ENCODE measurements at regions of chr5 and their contacts with region 1.

Region 1: GRCh38 chr5:176415952-176416924 is at the start of gene CLTB:
- DNase-seq: peak; percentile 95
- ATAC-seq: peak; percentile 97
- H3K4me3 ChIP-seq: peak within 1 kb of the TSS; percentile 51 to 86 (median 70)
- H3K4me3 Mint-ChIP-seq: peak within 1 kb of the TSS; percentile 83
- H3K27ac ChIP-seq: peak within 1 kb of the TSS in 1 of 2 donors; percentile 58
- H3K27ac Mint-ChIP-seq: peak within 1 kb of the TSS; percentile 77
- H3K4me1 ChIP-seq: peaks cover 14 to 19% of the 10 kb centered on the region in 2 donors
- H3K4me1 Mint-ChIP-seq: peaks cover 21% of the 10 kb centered on the region
- H3K27me3 ChIP-seq: no peaks in the 10 kb centered on the region
- H3K27me3 Mint-ChIP-seq: peaks cover 2% of the 10 kb centered on the region
- CTCF ChIP-seq: peak; percentile 74
- total RNA-seq, gene CLTB: 29.6 and 29.9 TPM in 2 replicates

Region 2: GRCh38 chr5:176361437-176362232 is 54.6 kb before region 1 on chr5 and contains the start of gene KIAA1191:
- CTCF ChIA-PET with region 1: interaction called, 15 read pairs
- POLR2A ChIA-PET with region 1: no interaction called
- intact Hi-C with region 1: loop called (anchors 5 kb)
- DNase-seq: peak; percentile 96
- ATAC-seq: peak; percentile 87
- H3K4me3 ChIP-seq: peak within 1 kb of the TSS; percentile 47 to 94 (median 82)
- H3K4me3 Mint-ChIP-seq: peak within 1 kb of the TSS; percentile 98
- H3K27ac ChIP-seq: peak within 1 kb of the TSS; percentile 77 to 92
- H3K27ac Mint-ChIP-seq: peak within 1 kb of the TSS; percentile 98
- H3K4me1 ChIP-seq: peaks cover 21 to 36% of the 10 kb centered on the region in 2 donors
- H3K4me1 Mint-ChIP-seq: peaks cover 42% of the 10 kb centered on the region
- H3K27me3 ChIP-seq: no peaks in the 10 kb centered on the region
- H3K27me3 Mint-ChIP-seq: no peaks in the 10 kb centered on the region
- CTCF ChIP-seq: peak; percentile 31
- total RNA-seq, gene KIAA1191: 82.9 and 88.1 TPM in 2 replicates

Region 3: DNA sequence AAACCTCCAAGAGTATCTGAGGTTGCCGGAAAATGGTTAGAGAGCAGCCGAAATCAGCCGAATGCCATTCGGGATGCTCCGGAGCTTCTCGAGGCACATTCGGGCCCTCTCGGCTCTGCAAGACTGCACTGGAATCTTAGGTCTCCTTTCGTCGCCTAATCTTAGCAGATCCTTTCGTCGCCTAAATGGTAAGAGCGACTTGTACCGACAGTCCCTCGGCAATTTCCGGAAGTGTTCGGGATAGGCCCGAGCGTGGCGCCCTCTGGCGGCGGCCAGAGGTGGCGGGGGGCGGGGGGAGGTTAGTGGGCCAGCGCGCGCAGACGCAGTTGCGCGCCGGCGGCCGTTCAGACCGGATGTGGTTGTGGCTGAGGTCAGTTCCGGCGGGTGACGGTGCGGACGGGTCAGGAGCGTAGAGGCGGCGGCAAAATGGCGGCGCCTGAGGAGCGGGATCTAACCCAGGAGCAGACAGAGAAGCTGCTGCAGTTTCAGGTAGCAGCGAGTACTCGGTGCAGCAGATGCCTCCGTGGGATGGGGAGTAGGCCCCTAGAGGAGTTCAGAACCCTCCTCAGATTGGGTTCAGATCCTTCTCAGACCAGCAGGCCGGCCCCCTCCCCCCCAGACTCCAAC is 31.9 kb after region 1 on chr5 and contains the start of gene FAF2:
- CTCF ChIA-PET with region 1: interaction called, 29 read pairs
- POLR2A ChIA-PET with region 1: interaction called, 6 read pairs
- intact Hi-C with region 1: loop called (anchors 1 kb)
- DNase-seq: peak; percentile 99
- ATAC-seq: peak; percentile 91
- H3K4me3 ChIP-seq: peak within 1 kb of the TSS; percentile 77 to 99 (median 99)
- H3K4me3 Mint-ChIP-seq: peak within 1 kb of the TSS; percentile 98
- H3K27ac ChIP-seq: peak within 1 kb of the TSS; percentile 81 to 93
- H3K27ac Mint-ChIP-seq: peak within 1 kb of the TSS; percentile 99
- H3K4me1 ChIP-seq: peaks cover 16 to 20% of the 10 kb centered on the region in 2 donors
- H3K4me1 Mint-ChIP-seq: peaks cover 32% of the 10 kb centered on the region
- H3K27me3 ChIP-seq: no peaks in the 10 kb centered on the region
- H3K27me3 Mint-ChIP-seq: no peaks in the 10 kb centered on the region
- CTCF ChIP-seq: peak; percentile 92
- total RNA-seq, gene FAF2: 35.1 and 41.3 TPM in 2 replicates

Region 4: GRCh38 chr5:176543428-176544173 is 127.4 kb after region 1 on chr5:
- CTCF ChIA-PET with region 1: interaction called, 33 read pairs
- POLR2A ChIA-PET with region 1: interaction called, 3 read pairs
- intact Hi-C with region 1: loop called (anchors 2 kb)
- DNase-seq: peak; percentile 88
- ATAC-seq: peak; percentile 76
- H3K4me3 ChIP-seq: peak overlapping the region; percentile 64 to 79 (median 73)
- H3K4me3 Mint-ChIP-seq: peak overlapping the region; percentile 96
- H3K27ac ChIP-seq: peak overlapping the region; percentile 82 to 88
- H3K27ac Mint-ChIP-seq: peak overlapping the region; percentile 98
- H3K4me1 ChIP-seq: peaks cover 30 to 36% of the 10 kb centered on the region in 2 donors
- H3K4me1 Mint-ChIP-seq: peaks cover 47% of the 10 kb centered on the region
- H3K27me3 ChIP-seq: no peaks in the 10 kb centered on the region
- H3K27me3 Mint-ChIP-seq: no peaks in the 10 kb centered on the region
- CTCF ChIP-seq: no peak

Region 5: GRCh38 chr5:176596689-176597416 is 180.6 kb after region 1 on chr5:
- CTCF ChIA-PET with region 1: interaction called, 4 read pairs
- POLR2A ChIA-PET with region 1: no interaction called
- intact Hi-C with region 1: loop called (anchors 1 kb)
- DNase-seq: peak; percentile 77
- ATAC-seq: peak; percentile 85
- H3K4me3 ChIP-seq: peak overlapping the region in 3 of 5 experiments; percentile 20 to 42 (median 39)
- H3K4me3 Mint-ChIP-seq: peak overlapping the region; percentile 75
- H3K27ac ChIP-seq: no peak overlapping the region
- H3K27ac Mint-ChIP-seq: no peak overlapping the region
- H3K4me1 ChIP-seq: peaks cover 0 to 10% of the 10 kb centered on the region in 2 donors
- H3K4me1 Mint-ChIP-seq: peaks cover 7% of the 10 kb centered on the region
- H3K27me3 ChIP-seq: peaks cover 0 to 14% (median 3%) of the 10 kb centered on the region in 4 experiments
- H3K27me3 Mint-ChIP-seq: no peaks in the 10 kb centered on the region
- CTCF ChIP-seq: peak; percentile 18

Region 6: GRCh38 chr5:176647030-176647866 is 231.0 kb after region 1 on chr5 and contains the start of gene TSPAN17:
- CTCF ChIA-PET with region 1: interaction called, 5 read pairs
- POLR2A ChIA-PET with region 1: no interaction called
- intact Hi-C with region 1: loop called (anchors 1 kb)
- DNase-seq: peak; percentile 99
- ATAC-seq: peak; percentile 97
- H3K4me3 ChIP-seq: peak within 1 kb of the TSS; percentile 12 to 72 (median 64)
- H3K4me3 Mint-ChIP-seq: peak within 1 kb of the TSS; percentile 92
- H3K27ac ChIP-seq: peak within 1 kb of the TSS; percentile 36 to 68
- H3K27ac Mint-ChIP-seq: peak within 1 kb of the TSS; percentile 90
- H3K4me1 ChIP-seq: peaks cover 21 to 52% of the 10 kb centered on the region in 2 donors
- H3K4me1 Mint-ChIP-seq: peaks cover 50% of the 10 kb centered on the region
- H3K27me3 ChIP-seq: no peaks in the 10 kb centered on the region
- H3K27me3 Mint-ChIP-seq: no peaks in the 10 kb centered on the region
- CTCF ChIP-seq: no peak
- total RNA-seq, gene TSPAN17: 21.0 and 23.7 TPM in 2 replicates